HepG2 (cell line): ENCODE measurements at regions of chr12 and their contacts with region 1.

Region 1: DNA sequence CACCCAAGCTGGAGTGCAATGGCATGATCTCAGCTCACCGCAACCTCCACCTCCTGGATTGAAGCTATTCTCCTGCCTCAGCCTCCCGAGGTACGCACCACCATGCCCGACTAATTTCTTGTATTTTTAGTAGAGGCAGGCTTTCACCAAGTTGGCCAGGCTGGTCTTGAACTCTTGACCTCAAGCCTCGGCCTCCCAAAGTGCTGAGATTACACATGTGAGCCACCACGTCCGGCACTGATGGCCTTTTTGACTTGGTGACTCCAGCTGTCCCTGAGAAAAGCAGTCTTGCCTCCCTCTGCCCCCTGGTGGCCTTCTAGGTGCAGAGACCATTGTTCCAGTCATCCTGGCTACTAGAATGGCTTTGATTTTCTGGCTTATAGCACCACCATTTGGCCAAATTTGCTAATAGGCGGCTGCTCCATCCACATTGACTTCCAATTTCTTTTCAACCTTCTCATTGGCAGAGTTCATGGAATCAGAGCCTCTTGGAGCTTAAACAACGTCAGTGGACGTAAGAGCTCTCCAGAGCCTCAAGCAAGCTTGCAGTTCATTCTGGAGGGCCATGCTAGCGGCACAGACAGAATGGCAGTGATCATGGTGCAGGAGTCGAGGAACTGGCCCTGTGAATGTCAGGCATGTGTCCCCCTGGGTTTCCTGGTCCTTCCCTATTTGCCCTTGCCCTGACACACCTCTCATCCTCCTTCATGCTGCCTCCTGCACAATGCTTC is 25.4 kb upstream of the EIF4B start:
- DNase-seq: peak; percentile 94
- ATAC-seq: peak; percentile 83
- H3K4me3 ChIP-seq: peak overlapping the region in 2 of 3 experiments; percentile 6 to 60; a peak in 3 of 6 replicates
- H3K27ac ChIP-seq: peak overlapping the region; percentile 52
- H3K4me1 ChIP-seq: peaks cover 34% of the 10 kb centered on the region
- H3K27me3 ChIP-seq: no peaks in the 10 kb centered on the region
- CTCF ChIP-seq: peak; percentile 100
- EP300 ChIP-seq: 0 out of 4 replicates have a peak, but pooled peaks of 1 of the 2 experiments have one; percentile 28
- POLR2A ChIP-seq: no peak
- RAD21 ChIP-seq: peak; percentile 100

Region 2: DNA sequence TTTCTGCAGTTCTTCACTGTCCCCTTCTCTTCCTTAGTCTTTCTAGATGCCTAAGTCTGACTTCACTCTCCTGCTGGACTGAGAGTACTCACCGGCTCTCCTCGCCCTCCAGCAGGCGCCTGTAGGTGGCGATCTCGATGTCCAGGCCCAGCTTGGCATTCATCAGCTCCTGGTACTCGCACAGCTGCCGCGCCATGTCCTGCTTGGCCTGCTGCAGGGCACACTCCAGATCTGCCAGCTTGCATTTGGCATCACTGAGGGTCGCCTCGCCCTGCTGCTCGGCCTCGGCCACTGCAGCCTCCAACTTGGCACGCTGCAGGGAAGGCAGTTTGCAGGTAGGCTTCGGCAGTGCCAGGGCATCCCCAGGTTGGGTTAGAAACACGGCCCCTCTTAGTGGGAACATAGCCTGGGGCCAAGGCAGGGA is 600.6 kb before region 1 on chr12:
- CTCF ChIA-PET with region 1: no interaction called
- POLR2A ChIA-PET with region 1: no interaction called
- in situ Hi-C with region 1: loop called (anchors 25 kb)
- intact Hi-C with region 1: no loop called
- DNase-seq: no peak
- ATAC-seq: peak; percentile 66
- H3K4me3 ChIP-seq: no peak overlapping the region
- H3K27ac ChIP-seq: no peak overlapping the region
- H3K4me1 ChIP-seq: no peaks in the 10 kb centered on the region
- H3K27me3 ChIP-seq: peaks cover 6 to 17% of the 10 kb centered on the region in 2 experiments; a peak in 3 of 5 replicates
- CTCF ChIP-seq: peak; percentile 56
- EP300 ChIP-seq: no peak
- POLR2A ChIP-seq: no peak
- RAD21 ChIP-seq: no peak

Region 3: DNA sequence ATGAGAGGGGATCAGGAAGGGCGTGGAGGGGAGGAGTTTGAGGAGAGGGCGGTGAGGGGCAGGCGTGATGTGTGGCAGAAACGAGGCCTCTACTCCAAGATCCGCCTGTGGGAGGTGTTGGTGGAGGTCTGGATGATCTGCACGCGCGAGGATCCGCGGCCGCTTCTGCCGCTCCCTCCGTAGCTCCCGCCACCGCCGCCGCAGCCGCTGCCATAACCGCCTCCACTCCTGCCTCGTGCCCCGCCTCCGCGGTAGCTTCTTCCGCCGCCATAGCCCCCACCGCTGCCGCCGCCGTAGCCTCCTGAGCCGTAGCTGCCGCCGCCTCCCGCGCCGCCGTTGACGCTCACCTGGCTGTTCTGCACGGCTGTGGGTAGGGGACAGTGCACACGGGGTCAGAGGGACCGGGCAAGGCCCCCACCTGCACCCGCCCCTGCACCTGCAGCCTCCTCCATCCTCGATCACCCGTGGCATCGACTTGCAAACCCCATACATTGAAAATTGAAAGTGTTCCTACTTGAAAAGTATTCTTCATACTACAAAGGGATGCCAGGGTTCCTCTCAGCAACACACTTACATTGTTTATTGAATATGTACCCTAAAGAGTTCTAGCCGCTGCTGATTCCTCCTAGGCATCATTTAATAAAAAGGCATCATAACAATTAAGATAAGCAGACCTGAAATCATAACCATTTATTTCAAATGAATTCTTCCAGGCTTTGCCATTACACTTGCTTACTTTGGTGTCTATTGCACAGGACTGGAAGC is 289.6 kb before region 1 on chr12:
- CTCF ChIA-PET with region 1: interaction called, 5 read pairs
- POLR2A ChIA-PET with region 1: no interaction called
- in situ Hi-C with region 1: loop called (anchors 25 kb)
- intact Hi-C with region 1: no loop called
- DNase-seq: no peak
- ATAC-seq: no peak
- H3K4me3 ChIP-seq: no peak overlapping the region
- H3K27ac ChIP-seq: no peak overlapping the region
- H3K4me1 ChIP-seq: no peaks in the 10 kb centered on the region
- H3K27me3 ChIP-seq: peaks cover 6 to 53% of the 10 kb centered on the region in 2 experiments; a peak in 3 of 5 replicates
- CTCF ChIP-seq: no peak
- EP300 ChIP-seq: no peak
- POLR2A ChIP-seq: no peak
- RAD21 ChIP-seq: no peak

Region 4: DNA sequence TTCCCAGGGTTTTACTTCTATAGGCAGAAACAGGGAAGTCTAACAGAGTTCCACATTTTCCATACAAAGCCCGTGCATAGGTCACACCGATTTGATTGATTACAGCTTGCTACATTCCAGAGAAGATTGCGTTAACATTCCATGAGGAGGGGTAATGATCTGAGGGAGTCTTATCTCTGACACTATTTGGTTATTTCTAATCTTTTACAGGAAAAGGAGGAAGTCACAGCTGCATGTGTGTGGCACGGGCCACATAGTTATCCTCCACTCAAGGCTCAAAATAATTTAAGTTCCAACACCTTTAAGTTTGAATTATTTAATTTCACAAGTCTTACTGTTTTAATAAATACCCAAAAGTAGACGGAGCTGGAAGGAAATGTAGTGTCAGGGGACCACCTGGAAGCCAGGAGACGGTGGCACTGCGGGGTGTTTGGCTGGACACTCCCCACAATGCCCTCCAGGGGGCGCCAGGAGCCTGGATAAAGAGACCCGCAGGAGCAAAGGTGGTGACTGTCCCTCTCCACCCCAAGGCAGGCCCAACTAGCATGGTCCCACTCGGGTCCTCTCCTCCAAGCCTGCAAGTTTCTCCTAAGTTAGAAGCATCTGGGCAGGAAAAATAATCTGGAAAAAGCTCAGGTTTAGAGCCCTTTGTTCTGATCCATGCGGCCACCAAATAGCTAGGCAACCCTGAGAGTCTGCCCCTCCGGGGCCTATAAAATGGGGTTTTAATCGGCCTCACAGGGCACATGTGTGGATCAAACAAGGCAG is 96.1 kb before region 1 on chr12:
- CTCF ChIA-PET with region 1: interaction called, 212 read pairs
- POLR2A ChIA-PET with region 1: interaction called, 32 read pairs
- in situ Hi-C with region 1: loop called (anchors 5 kb)
- intact Hi-C with region 1: loop called (anchors 1 kb)
- DNase-seq: peak; percentile 97
- ATAC-seq: peak; percentile 80
- H3K4me3 ChIP-seq: peak overlapping the region in 2 of 3 experiments; percentile 29 to 42; a peak in 1 of 6 replicates
- H3K27ac ChIP-seq: peak overlapping the region; percentile 86
- H3K4me1 ChIP-seq: peaks cover 60% of the 10 kb centered on the region
- H3K27me3 ChIP-seq: no peaks in the 10 kb centered on the region
- CTCF ChIP-seq: peak; percentile 96
- EP300 ChIP-seq: peak; percentile 65 to 93; a peak in 2 of 4 replicates
- POLR2A ChIP-seq: no peak; a peak in 1 of 4 replicates
- RAD21 ChIP-seq: peak; percentile 98

Region 5: DNA sequence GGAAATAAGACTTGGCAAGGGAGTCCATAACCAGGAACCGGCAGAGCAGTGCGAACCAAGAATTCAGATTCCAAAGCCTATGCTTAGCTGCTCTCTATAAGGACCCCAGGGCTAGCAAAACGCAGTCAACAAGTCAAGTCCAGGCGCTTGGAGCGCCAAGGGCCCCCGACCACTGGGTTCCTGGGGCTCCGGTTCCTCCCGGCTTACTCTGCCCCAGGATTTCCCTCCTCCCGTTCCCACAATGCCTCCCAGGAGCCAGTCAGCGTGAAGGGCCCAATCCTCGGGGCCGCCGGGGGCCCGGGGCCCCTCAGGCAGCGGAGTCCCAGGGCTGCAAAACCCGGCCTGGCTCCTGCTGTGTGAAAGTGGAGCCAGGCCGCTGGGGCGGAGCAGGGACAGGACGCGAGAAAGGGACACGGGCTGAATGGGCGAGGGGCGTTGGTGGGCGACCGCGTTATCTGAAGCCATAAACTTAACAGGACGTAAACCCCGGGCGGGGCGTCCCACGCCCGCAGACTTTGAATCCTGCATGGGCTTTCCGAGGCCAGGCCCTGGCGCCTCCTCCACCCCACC is 77.5 kb before region 1 on chr12:
- CTCF ChIA-PET with region 1: interaction called, 50 read pairs
- POLR2A ChIA-PET with region 1: interaction called, 82 read pairs
- in situ Hi-C with region 1: no loop called
- intact Hi-C with region 1: loop called (anchors 1 kb)
- DNase-seq: peak; percentile 69
- ATAC-seq: peak; percentile 71
- H3K4me3 ChIP-seq: peak overlapping the region; percentile 87 to 97 (median 95)
- H3K27ac ChIP-seq: peak overlapping the region; percentile 71
- H3K4me1 ChIP-seq: peaks cover 73% of the 10 kb centered on the region
- H3K27me3 ChIP-seq: no peaks in the 10 kb centered on the region; a peak in 1 of 5 replicates
- CTCF ChIP-seq: no peak
- EP300 ChIP-seq: no peak
- POLR2A ChIP-seq: peak in 1 of 2 experiments; percentile 1; a peak in 3 of 4 replicates
- RAD21 ChIP-seq: peak; percentile 46; the same call in 1 of the 2 replicates

Region 6: DNA sequence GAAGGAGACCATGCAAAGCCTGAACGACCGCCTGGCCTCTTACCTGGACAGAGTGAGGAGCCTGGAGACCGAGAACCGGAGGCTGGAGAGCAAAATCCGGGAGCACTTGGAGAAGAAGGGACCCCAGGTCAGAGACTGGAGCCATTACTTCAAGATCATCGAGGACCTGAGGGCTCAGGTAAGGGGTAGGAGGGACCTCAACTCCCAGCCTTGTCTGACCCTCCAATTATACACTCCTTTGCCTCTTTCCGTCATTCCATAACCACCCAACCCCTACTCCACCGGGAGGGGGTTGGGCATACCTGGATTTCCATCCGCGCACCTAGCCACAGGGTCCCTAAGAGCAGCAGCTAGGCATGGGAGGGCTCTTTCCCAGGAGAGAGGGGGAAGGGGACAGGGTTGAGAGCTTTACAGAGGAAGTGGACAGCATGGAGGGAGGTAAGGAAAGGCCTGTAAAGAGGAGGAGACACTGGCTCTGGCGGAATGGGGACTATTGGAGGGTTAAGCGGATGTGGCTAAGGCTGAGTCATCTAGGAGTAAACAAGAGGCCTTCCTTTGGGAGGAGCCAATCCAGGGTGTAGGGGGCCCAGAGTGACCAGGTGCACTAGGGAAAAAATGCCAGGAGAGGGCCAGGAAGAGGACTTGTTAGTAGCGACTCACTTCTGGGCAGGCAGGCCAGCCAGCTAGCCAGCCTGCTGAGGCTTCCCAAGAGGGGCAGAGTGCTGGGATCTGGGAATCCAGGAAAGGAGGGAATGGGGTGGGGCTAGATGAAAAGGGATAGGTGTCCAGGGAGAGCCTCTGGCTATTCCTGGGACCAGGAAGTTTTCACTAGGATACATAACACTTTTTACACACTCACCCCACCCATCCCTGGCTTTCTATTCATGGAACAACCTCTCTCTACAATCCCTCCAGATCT is 31.2 kb before region 1 on chr12:
- CTCF ChIA-PET with region 1: interaction called, 8 read pairs
- POLR2A ChIA-PET with region 1: interaction called, 14 read pairs
- in situ Hi-C with region 1: no loop called
- intact Hi-C with region 1: no loop called
- DNase-seq: peak; percentile 98
- ATAC-seq: peak; percentile 83
- H3K4me3 ChIP-seq: peak overlapping the region; percentile 88 to 100 (median 99)
- H3K27ac ChIP-seq: peak overlapping the region; percentile 100
- H3K4me1 ChIP-seq: peaks cover 68% of the 10 kb centered on the region
- H3K27me3 ChIP-seq: peaks cover 0 to 2% of the 10 kb centered on the region in 2 experiments; a peak in 1 of 5 replicates
- CTCF ChIP-seq: peak; percentile 42; the same call in 1 of the 2 replicates
- EP300 ChIP-seq: peak in 1 of 2 experiments; percentile 90; a peak in 2 of 4 replicates
- POLR2A ChIP-seq: peak; percentile 82 to 96
- RAD21 ChIP-seq: peak; percentile 81